ENCODE measurements at regions of chr4 and their contacts with region 1.

Region 1: DNA sequence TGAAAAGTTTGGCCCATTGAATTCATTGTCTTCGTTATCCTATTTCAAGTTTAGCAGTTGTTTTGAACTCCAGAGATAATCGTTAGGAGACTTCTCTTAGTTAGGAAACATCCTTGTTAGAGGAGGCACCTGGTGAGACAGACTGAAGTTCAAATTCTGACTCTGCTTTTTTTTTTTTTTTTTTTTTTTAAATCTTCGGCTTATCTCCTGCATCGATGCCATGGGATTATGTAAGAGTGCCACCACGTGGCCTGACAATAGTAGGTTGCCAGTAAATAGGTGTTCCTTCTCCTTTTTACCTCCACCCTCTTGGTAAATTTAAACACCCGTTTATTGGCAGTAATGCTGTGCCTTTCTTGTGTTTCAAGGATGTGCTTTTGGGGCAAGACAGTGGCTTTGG is 149.3 kb downstream of the SOWAHB start:
- DNase-seq: peak; percentile 22 to 49
- H3K4me3 ChIP-seq: no peak overlapping the region
- H3K27ac ChIP-seq: no peak overlapping the region
- H3K4me1 ChIP-seq: peaks cover 5% of the 10 kb centered on the region; the same call in 1 of the 2 replicates
- H3K27me3 ChIP-seq: no peaks in the 10 kb centered on the region
- CTCF ChIP-seq: no peak

Region 2: GRCh38 chr4:76430519-76431388 is 317.9 kb before region 1 on chr4:
- CTCF ChIA-PET with region 1: no interaction called
- POLR2A ChIA-PET with region 1: no interaction called
- intact Hi-C with region 1: loop called (anchors 5 kb)
- DNase-seq: peak in 1 of 2 experiments; percentile 55
- H3K4me3 ChIP-seq: peak overlapping the region; percentile 33; the same call in 1 of the 2 replicates
- H3K27ac ChIP-seq: no peak overlapping the region
- H3K4me1 ChIP-seq: no peaks in the 10 kb centered on the region
- H3K27me3 ChIP-seq: no peaks in the 10 kb centered on the region
- CTCF ChIP-seq: peak; percentile 75

Region 3: DNA sequence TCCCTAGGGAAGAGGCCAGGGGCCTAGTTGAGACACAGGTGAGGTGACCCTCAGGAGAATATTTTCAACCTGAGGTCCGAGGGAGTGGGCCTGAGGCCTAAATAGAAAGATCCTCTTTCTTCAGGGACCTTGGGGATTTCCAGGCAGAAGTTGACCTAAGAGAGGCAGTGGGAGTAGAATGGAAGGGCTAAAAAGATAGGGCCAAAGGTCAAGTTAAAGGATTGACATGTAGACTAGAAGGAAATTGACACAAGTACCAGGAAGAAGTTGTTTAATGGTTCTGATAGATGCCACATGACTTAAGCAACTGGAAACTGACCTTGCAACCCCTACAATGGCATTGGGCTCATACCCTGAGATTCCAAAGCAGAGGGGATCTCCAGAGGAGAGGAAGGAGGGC is 236.7 kb before region 1 on chr4:
- CTCF ChIA-PET with region 1: no interaction called
- POLR2A ChIA-PET with region 1: no interaction called
- intact Hi-C with region 1: loop called (anchors 5 kb)
- DNase-seq: no peak
- H3K4me3 ChIP-seq: no peak overlapping the region
- H3K27ac ChIP-seq: no peak overlapping the region
- H3K4me1 ChIP-seq: no peaks in the 10 kb centered on the region
- H3K27me3 ChIP-seq: no peaks in the 10 kb centered on the region
- CTCF ChIP-seq: no peak

Region 4: GRCh38 chr4:76718831-76719230 is 29.8 kb before region 1 on chr4:
- CTCF ChIA-PET with region 1: no interaction called
- POLR2A ChIA-PET with region 1: no interaction called
- intact Hi-C with region 1: loop called (anchors 1 kb)
- DNase-seq: no peak
- H3K4me3 ChIP-seq: no peak overlapping the region
- H3K27ac ChIP-seq: no peak overlapping the region
- H3K4me1 ChIP-seq: peaks cover 27% of the 10 kb centered on the region
- H3K27me3 ChIP-seq: no peaks in the 10 kb centered on the region
- CTCF ChIP-seq: no peak

Measured in PC-9 (cell line).